AG04449 (cell line): ENCODE measurements at regions of chr3 and their contacts with region 1.

Region 1: DNA sequence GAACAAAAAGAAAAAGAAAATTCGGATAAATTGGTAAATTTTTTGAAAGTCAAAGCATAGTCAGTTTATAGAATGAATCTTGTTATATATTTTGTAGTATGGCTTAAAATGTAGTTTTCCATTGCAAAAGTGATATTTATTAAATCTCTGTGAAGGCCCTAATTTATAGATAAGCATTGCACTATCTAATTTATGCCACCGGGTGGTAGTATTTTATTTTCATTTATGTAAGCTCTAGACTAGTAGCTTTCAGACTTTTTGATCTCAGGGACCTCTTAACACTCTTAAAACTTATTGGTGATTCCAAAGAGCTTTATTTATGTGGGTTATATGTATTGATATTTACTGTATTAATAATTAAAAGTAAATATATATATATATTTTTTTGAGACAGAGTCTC is 133.9 kb upstream of the LRRFIP2 start:
- DNase-seq: no peak
- H3K4me3 ChIP-seq: no peak overlapping the region
- CTCF ChIP-seq: no peak

Region 2: DNA sequence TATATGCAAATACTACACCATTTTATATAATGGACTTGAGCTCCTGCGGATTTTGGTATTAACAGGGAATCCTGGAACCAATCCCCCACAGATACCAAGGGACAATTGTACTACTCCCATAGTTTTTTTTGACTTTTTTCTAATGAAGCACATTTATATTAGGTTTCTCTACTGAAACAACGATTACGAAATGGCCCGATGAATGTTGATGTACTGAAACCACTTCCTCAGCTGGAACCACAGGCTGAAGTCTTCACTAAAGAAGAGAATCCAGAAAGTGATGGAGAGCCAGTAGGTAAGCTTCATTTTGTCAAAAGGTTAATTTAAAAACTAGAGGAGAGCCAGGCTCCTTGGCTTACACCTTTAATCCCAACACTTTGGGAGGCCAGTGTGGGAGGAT is 12.3 kb before region 1 on chr3:
- CTCF ChIA-PET with region 1: interaction called, 48 read pairs
- POLR2A ChIA-PET with region 1: no interaction called
- DNase-seq: no peak
- H3K4me3 ChIP-seq: no peak overlapping the region
- CTCF ChIP-seq: no peak

Region 3: GRCh38 chr3:37324850-37325321 is 16.6 kb after region 1 on chr3:
- CTCF ChIA-PET with region 1: interaction called, 30 read pairs
- POLR2A ChIA-PET with region 1: no interaction called
- DNase-seq: no peak
- H3K4me3 ChIP-seq: no peak overlapping the region
- CTCF ChIP-seq: no peak

Region 4: GRCh38 chr3:37346227-37347005 is 38.2 kb after region 1 on chr3:
- CTCF ChIA-PET with region 1: interaction called, 10 read pairs
- POLR2A ChIA-PET with region 1: no interaction called
- DNase-seq: no peak
- H3K4me3 ChIP-seq: no peak overlapping the region
- CTCF ChIP-seq: no peak